Ovary (tissue), 10 donors: ENCODE measurements at regions of chr1 and their contacts with region 1.

Region 1: DNA sequence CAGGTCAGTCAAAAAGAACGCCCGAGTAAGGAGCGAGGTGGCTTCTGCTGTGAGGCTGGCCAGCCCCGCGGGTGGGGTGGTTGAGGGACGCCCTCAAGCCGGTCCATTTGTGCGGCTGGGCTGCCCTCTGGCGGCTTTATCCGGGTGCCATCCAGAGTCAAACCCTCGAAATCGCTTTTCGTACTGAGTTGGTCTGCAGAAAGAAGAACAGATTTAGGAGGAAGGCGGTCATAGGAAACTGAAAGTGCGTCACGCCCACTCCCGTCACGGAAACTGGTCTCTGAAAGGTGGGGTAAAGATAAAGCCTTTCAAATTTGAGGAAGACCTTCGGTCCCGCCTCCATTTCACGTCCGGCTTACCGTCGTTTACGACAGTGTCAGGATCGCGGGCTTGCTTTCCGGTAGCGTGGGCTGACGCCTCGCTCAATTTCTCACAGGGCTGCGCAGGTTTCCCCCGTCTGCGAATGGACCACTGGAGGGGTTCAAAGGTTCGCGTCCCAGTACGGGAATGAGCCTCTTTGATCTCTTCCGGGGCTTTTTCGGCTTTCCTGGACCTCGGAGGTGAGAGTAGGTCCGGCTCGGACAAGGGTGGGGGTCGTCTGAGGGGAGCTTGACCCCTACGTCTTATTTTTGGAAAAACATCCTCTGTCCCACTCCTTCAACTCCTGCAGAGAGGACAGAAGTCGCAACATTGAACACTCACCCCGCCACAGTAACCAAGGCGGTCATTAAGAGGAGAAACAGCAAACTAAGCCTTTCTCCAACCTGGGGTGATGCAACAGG is at the start of gene HAX1:
- DNase-seq: peak; percentile 93 to 95 (median 94)
- H3K4me3 ChIP-seq: peak within 1 kb of the TSS; percentile 91
- H3K27ac ChIP-seq: peak within 1 kb of the TSS; percentile 69 to 89
- H3K4me1 ChIP-seq: peaks cover 2% of the 10 kb centered on the region
- H3K27me3 ChIP-seq: no peaks in the 10 kb centered on the region
- CTCF ChIP-seq: peak; percentile 65 to 88 (median 82)
- EP300 ChIP-seq: no peak
- POLR2A ChIP-seq: peak; percentile 79
- total RNA-seq, gene HAX1: 67.2 to 134 (median 81.3) TPM

Region 2: GRCh38 chr1:154256686-154257085 is 15.7 kb before region 1 on chr1:
- intact Hi-C with region 1: loop called in 1 of 4 experiments (anchors 2 kb)
- DNase-seq: no peak
- H3K4me3 ChIP-seq: no peak overlapping the region
- H3K27ac ChIP-seq: no peak overlapping the region
- H3K4me1 ChIP-seq: no peaks in the 10 kb centered on the region
- H3K27me3 ChIP-seq: no peaks in the 10 kb centered on the region
- CTCF ChIP-seq: no peak
- EP300 ChIP-seq: no peak
- POLR2A ChIP-seq: no peak

Region 3: DNA sequence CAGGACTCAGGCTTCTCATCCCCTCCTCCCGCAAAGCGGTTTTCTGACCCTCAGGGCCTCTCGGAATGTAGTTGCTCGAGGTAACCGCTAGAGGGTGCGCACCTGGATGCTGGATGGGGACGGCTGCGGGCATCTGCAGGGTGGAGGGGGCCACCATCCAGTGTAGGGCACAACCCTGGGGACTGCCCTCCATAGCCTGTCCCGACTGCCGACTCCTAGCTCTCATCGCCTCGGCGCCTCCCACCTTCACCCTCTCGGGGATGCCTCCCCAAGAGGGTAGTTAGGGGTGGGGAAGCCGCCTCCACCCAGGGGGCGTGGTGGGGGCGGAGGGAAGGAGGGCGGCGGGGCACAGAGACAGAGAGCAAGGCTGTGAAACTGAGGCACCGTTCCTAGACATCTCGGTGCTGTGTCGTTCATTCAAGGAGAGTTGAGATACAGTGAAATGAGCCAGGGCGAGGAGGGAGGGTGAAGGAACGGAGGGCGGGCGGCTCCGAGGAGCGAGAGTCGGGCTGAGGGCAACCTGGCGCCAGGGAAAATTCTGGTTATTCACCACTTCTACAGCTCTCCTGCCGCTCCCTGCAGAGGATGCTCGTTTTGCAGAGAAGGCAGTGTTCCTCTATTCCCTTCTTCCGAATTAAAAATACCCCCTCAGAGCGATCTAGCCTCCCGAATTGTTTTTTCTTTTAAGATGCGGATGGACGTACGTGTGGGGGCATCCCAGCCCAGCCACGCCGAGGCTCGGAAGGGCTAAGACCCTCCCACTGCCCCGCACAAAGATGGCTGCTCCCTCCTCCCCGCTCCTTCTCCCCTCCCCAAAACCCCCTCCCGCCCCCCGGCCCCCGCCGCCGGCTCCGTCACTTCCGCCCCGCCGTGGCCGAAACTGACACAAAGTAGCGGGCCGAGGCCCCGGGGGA is 52.5 kb after region 1 on chr1 and contains the start of gene ATP8B2:
- intact Hi-C with region 1: loop called in 1 of 4 experiments (anchors 5 kb)
- DNase-seq: peak; percentile 79 to 88 (median 87)
- H3K4me3 ChIP-seq: peak within 1 kb of the TSS; percentile 72
- H3K27ac ChIP-seq: peak within 1 kb of the TSS; percentile 94
- H3K4me1 ChIP-seq: peaks cover 17% of the 10 kb centered on the region
- H3K27me3 ChIP-seq: no peaks in the 10 kb centered on the region
- CTCF ChIP-seq: peak; percentile 79 to 90 (median 84)
- EP300 ChIP-seq: no peak
- POLR2A ChIP-seq: no peak
- total RNA-seq, gene ATP8B2: 59.7 to 112 (median 83.7) TPM